ENCODE measurements at regions of chr3 and their contacts with region 1.

Region 1: DNA sequence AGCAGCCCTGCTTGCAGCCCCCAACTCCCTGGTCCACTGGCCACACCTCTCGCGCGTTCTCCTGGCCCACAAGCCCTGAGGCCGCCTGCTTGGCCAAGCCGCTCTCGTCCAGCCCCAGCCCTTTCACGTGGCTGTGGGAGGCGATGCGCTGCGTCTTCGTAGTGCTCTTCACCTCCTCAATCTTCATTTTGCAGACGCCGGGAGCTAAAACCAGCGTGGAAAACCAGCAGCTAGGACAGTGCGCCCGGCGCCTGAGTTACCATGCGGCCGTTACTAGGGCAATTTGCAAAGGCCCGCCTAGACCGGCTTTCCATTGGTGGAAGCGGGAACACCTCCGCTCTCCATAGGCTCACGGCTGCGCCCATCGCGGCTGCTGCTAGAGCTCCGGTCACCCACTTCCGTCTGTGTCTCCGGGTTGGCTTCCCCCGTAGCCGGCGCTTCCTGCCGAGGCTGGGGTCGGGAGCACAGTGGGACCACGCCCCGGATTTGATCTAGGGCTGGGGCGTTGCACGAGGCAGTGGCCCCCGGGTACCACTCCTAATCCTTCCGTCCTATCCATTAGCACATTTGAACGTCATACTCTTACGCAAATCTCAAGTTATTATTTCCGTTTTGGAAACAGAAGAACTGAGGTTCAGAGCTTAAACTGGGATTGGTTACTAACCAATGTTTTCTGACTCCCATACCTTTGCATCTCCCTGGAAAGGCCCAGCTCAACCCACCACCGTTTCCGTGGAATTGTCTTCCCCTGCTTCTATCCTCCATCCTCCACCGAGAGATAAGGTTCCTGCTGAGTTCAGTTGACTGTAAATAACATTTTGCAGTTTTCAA is at the start of gene RUVBL1:
- DNase-seq: peak; percentile 87
- ATAC-seq: peak; percentile 97
- H3K4me3 Mint-ChIP-seq: peak within 1 kb of the TSS; percentile 97
- H3K27ac Mint-ChIP-seq: peak within 1 kb of the TSS; percentile 93
- H3K4me1 Mint-ChIP-seq: peaks cover 23% of the 10 kb centered on the region
- H3K27me3 Mint-ChIP-seq: no peaks in the 10 kb centered on the region
- CTCF ChIP-seq: no peak
- total RNA-seq, gene RUVBL1: 44.8 and 46.6 TPM in 2 replicates

Region 2: GRCh38 chr3:126921085-126921824 is 1202.5 kb before region 1 on chr3:
- CTCF ChIA-PET with region 1: no interaction called
- POLR2A ChIA-PET with region 1: interaction called, 10 read pairs
- intact Hi-C with region 1: no loop called
- DNase-seq: no peak
- ATAC-seq: no peak
- H3K4me3 Mint-ChIP-seq: no peak overlapping the region
- H3K27ac Mint-ChIP-seq: no peak overlapping the region
- H3K4me1 Mint-ChIP-seq: peaks cover 2% of the 10 kb centered on the region
- H3K27me3 Mint-ChIP-seq: peaks cover 20% of the 10 kb centered on the region
- CTCF ChIP-seq: no peak

Region 3: DNA sequence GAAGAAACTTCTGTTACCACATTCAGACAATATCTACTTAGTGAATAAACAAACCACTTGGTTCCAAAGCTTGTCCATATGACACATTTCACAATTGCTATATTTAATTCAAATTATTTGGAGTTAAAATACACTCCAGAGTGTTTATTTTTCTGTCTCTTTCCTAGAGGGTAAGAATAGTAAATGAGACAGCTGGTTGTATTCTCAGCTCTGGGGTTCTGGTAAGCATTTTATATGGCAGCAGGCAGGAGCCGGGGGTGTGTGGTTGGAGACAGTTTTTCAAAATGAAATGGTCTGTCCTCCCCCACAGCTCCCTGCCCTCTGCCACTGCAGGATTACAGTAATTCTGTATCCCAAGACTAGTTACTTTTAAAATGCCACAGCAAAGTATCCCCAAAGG is 82.4 kb before region 1 on chr3:
- CTCF ChIA-PET with region 1: no interaction called
- POLR2A ChIA-PET with region 1: no interaction called
- intact Hi-C with region 1: no loop called
- DNase-seq: no peak
- ATAC-seq: no peak
- H3K4me3 Mint-ChIP-seq: no peak overlapping the region
- H3K27ac Mint-ChIP-seq: no peak overlapping the region
- H3K4me1 Mint-ChIP-seq: no peaks in the 10 kb centered on the region
- H3K27me3 Mint-ChIP-seq: peaks cover 9% of the 10 kb centered on the region
- CTCF ChIP-seq: no peak

Region 4: DNA sequence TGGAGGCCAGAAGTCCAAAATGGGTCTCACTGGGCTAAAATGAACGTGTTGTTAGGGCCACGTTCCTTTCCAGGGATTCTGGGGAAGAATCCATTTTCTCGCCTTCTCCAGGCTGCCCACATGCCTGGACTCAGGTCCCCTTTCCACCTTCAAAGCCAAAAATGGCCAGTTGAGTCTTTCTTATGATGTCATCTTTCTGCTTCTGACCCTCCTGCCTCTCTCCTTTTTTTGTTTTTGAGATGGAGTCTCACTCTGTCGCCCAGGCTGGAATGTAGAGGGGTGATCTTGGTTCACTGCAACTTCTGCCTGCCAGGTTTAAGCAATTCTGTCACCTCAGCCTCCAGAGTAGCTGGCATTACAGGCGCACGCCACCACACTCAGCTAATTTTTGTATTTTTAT is 18.8 kb after region 1 on chr3:
- CTCF ChIA-PET with region 1: no interaction called
- POLR2A ChIA-PET with region 1: no interaction called
- intact Hi-C with region 1: no loop called
- DNase-seq: no peak
- ATAC-seq: no peak
- H3K4me3 Mint-ChIP-seq: no peak overlapping the region
- H3K27ac Mint-ChIP-seq: no peak overlapping the region
- H3K4me1 Mint-ChIP-seq: no peaks in the 10 kb centered on the region
- H3K27me3 Mint-ChIP-seq: peaks cover 6% of the 10 kb centered on the region
- CTCF ChIP-seq: no peak

Region 5: GRCh38 chr3:128153156-128154041 is 29.6 kb after region 1 on chr3 and contains the start of gene EEFSEC:
- CTCF ChIA-PET with region 1: interaction called, 5 read pairs
- POLR2A ChIA-PET with region 1: interaction called, 69 read pairs
- intact Hi-C with region 1: loop called (anchors 1 kb)
- DNase-seq: peak; percentile 89
- ATAC-seq: peak; percentile 95
- H3K4me3 Mint-ChIP-seq: peak within 1 kb of the TSS; percentile 96
- H3K27ac Mint-ChIP-seq: peak within 1 kb of the TSS; percentile 95
- H3K4me1 Mint-ChIP-seq: peaks cover 17% of the 10 kb centered on the region
- H3K27me3 Mint-ChIP-seq: no peaks in the 10 kb centered on the region
- CTCF ChIP-seq: no peak
- total RNA-seq, gene EEFSEC: 20.0 and 21.3 TPM in 2 replicates